ENCODE measurements at regions of chr1 and their contacts with region 1.

Region 1: DNA sequence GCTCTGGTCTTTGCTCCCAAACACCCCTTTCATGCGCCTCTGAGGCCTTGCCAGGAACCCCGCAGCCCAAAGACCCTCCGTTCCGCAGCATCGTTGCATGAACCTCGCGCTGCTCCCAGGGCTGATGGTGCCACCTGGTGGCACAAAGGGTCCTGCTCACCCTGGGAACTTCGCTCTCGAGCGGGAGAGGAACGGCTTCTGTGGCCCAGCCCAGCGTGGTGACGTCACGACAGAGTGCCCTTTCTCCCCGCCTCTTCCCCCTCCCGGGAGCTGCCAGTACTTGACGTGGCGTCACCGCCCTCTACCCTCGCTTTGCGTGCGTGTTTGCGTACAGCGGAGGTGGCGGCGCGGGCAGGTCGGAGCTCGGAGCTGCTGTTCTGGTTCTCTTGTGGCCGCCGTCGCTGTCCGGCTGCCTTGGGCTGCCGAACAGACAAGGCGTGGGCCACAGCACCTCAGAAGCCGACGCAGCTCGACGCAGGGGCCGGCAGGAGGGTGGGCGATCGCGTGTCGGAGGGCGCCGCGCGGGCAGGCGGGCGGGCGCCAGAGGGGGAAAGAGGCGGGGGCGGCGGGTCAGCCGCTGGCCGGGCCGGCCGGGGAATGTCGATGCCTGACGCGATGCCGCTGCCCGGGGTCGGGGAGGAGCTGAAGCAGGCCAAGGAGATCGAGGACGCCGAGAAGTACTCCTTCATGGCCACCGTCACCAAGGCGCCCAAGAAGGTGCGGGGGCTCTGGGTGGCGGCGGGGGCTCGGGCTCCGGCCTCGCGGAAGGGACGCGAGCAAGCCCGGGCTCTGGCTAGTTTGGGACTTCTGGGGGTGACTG is at the start of gene AHCYL1:
- DNase-seq: peak; percentile 96 to 97
- H3K4me3 ChIP-seq: peak within 1 kb of the TSS; percentile 66
- H3K4me3 Mint-ChIP-seq: peak within 1 kb of the TSS; percentile 88
- H3K27ac Mint-ChIP-seq: peak within 1 kb of the TSS; percentile 96
- H3K4me1 ChIP-seq: peaks cover 17% of the 10 kb centered on the region
- H3K4me1 Mint-ChIP-seq: peaks cover 11% of the 10 kb centered on the region
- H3K27me3 ChIP-seq: no peaks in the 10 kb centered on the region
- H3K27me3 Mint-ChIP-seq: no peaks in the 10 kb centered on the region
- CTCF ChIP-seq: peak; percentile 74 to 85
- total RNA-seq, gene AHCYL1: 62.6 and 64.2 TPM in 2 replicates

Region 2: DNA sequence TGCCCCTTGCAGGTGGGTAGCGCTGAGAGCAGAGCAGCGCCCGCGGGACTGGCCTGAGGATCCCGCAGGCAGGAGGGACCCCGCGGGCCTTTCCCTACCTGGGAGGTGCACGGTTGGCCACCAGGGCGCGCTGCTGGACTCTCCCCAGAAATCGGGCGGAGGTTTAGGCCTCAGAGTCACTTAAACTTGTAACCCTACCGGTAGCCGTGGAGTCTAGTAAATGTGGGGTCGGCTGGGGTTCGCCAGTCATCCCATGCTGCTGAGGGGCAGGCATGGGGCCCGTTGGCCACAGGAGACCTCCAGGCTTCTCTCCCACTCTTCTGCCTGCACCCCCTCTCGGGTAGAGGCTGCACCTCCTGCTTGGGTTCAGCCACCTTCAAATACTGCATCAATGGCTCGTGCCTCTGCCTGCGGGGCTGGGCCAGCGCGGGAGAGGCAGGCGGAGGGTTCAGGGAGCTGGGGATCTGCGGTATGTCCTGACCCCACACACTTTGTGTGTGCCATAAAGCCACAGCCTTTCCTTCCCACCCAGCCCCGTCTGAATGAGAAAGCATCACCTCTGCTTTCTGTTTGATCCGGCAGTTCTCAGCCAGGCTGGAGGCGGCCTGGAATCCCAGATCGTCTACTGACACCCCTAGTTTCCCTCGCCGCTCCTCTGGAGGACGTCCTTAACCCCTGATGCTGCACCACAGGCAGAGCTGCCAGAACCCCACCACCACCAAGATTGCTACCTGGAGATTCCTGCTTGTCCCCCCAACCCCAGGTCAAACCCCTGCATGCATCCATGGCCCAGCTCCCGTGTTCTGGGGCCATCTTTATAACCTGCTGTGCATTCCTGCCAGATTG is 341.1 kb before region 1 on chr1:
- CTCF ChIA-PET with region 1: interaction called, 23 read pairs
- POLR2A ChIA-PET with region 1: no interaction called
- intact Hi-C with region 1: no loop called
- DNase-seq: peak; percentile 76 to 81
- H3K4me3 ChIP-seq: no peak overlapping the region
- H3K4me3 Mint-ChIP-seq: no peak overlapping the region
- H3K27ac Mint-ChIP-seq: no peak overlapping the region
- H3K4me1 ChIP-seq: no peaks in the 10 kb centered on the region
- H3K4me1 Mint-ChIP-seq: no peaks in the 10 kb centered on the region
- H3K27me3 ChIP-seq: no peaks in the 10 kb centered on the region
- H3K27me3 Mint-ChIP-seq: no peaks in the 10 kb centered on the region
- CTCF ChIP-seq: peak; percentile 63 to 72

Region 3: DNA sequence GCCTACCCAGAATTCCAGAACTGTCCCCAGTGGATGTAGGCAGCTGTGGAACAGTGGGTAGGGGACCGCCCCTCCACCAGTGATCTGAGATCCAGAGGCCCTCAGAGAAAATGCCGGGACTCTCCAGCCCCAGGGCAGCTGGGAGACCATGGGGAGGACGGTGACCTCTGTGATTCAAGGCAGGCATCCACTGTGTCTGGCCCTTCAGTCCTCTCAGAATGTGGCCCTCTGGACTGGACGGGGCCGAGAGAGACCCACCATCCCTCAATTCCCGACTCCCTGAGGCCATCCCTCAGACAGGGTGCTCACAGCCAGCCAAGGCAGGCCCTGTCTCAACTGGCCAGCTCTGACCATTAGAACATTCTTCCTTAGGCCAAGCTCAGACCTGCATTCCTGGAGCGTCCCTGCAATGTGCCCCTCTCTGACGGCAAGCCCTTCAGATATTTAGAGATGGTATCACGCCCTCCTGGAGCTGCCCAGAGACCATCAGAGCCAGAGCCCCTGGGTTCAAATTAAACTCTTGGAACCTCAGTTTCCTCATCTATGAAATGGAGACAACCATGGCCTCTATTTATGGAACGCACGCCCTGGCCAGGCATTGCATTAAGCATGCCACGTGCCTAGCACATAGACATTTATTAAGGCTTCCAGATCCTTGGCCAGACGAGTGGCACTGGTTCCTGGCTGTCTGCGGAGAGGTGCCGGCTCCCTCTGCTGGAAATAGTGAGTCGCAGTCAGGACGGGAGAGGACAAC is 211.3 kb before region 1 on chr1:
- CTCF ChIA-PET with region 1: interaction called, 54 read pairs
- POLR2A ChIA-PET with region 1: interaction called, 3 read pairs
- intact Hi-C with region 1: loop called (anchors 1 kb)
- DNase-seq: peak; percentile 76 to 82
- H3K4me3 ChIP-seq: no peak overlapping the region
- H3K4me3 Mint-ChIP-seq: no peak overlapping the region
- H3K27ac Mint-ChIP-seq: no peak overlapping the region
- H3K4me1 ChIP-seq: no peaks in the 10 kb centered on the region; the same call in 1 of the 2 replicates
- H3K4me1 Mint-ChIP-seq: no peaks in the 10 kb centered on the region
- H3K27me3 ChIP-seq: no peaks in the 10 kb centered on the region
- H3K27me3 Mint-ChIP-seq: no peaks in the 10 kb centered on the region
- CTCF ChIP-seq: peak; percentile 48 to 75

Region 4: DNA sequence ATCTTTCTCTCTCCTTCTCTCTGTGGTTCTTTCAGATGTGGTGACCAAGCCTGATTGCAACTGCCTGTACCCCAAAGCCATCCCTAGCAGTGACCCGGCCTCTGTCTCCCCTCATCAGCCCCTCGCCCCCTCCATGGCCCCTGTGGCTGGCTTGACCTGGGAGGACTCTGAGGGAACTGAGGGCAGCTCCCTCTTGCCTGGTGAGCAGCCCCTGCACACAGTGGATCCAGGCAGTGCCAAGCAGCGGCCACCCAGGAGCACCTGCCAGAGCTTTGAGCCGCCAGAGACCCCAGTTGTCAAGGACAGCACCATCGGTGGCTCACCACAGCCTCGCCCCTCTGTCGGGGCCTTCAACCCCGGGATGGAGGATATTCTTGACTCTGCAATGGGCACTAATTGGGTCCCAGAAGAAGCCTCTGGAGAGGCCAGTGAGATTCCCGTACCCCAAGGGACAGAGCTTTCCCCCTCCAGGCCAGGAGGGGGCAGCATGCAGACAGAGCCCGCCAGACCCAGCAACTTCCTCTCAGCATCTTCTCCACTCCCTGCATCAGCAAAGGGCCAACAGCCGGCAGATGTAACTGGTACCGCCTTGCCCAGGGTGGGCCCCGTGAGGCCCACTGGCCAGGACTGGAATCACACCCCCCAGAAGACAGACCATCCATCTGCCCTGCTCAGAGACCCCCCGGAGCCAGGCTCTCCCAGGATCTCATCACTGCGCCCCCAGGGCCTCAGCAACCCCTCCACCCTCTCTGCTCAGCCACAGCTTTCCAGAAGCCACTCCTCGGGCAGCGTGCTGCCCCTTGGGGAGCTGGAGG is 61.3 kb before region 1 on chr1:
- CTCF ChIA-PET with region 1: interaction called, 20 read pairs
- POLR2A ChIA-PET with region 1: interaction called, 4 read pairs
- intact Hi-C with region 1: loop called (anchors 1 kb)
- DNase-seq: peak; percentile 49 to 55
- H3K4me3 ChIP-seq: no peak overlapping the region
- H3K4me3 Mint-ChIP-seq: no peak overlapping the region
- H3K27ac Mint-ChIP-seq: no peak overlapping the region
- H3K4me1 ChIP-seq: peaks cover under 1% of the 10 kb centered on the region; the same call in 1 of the 2 replicates
- H3K4me1 Mint-ChIP-seq: peaks cover 6% of the 10 kb centered on the region
- H3K27me3 ChIP-seq: no peaks in the 10 kb centered on the region
- H3K27me3 Mint-ChIP-seq: no peaks in the 10 kb centered on the region
- CTCF ChIP-seq: peak; percentile 51 to 57

Region 5: GRCh38 chr1:109947582-109948286 is 36.9 kb before region 1 on chr1:
- CTCF ChIA-PET with region 1: interaction called, 4 read pairs
- POLR2A ChIA-PET with region 1: no interaction called
- intact Hi-C with region 1: loop called (anchors 5 kb)
- DNase-seq: no peak
- H3K4me3 ChIP-seq: no peak overlapping the region
- H3K4me3 Mint-ChIP-seq: peak overlapping the region; percentile 33
- H3K27ac Mint-ChIP-seq: peak overlapping the region; percentile 84
- H3K4me1 ChIP-seq: peaks cover 37% of the 10 kb centered on the region
- H3K4me1 Mint-ChIP-seq: peaks cover 22% of the 10 kb centered on the region
- H3K27me3 ChIP-seq: no peaks in the 10 kb centered on the region
- H3K27me3 Mint-ChIP-seq: no peaks in the 10 kb centered on the region
- CTCF ChIP-seq: no peak